Caco-2 (cell line): ENCODE measurements at regions of chr2 and their contacts with region 1.

Region 1: GRCh38 chr2:13193898-13194297 is 477.2 kb downstream of the TRIB2 start:
- DNase-seq: peak in 1 of 2 experiments; percentile 28
- H3K4me3 ChIP-seq: no peak overlapping the region
- H3K4me3 Mint-ChIP-seq: no peak overlapping the region
- H3K27ac Mint-ChIP-seq: no peak overlapping the region
- H3K4me1 ChIP-seq: no peaks in the 10 kb centered on the region
- H3K4me1 Mint-ChIP-seq: no peaks in the 10 kb centered on the region
- H3K27me3 ChIP-seq: no peaks in the 10 kb centered on the region
- H3K27me3 Mint-ChIP-seq: no peaks in the 10 kb centered on the region
- CTCF ChIP-seq: peak; percentile 40 to 42

Region 2: GRCh38 chr2:13413989-13414388 is 220.1 kb after region 1 on chr2:
- CTCF ChIA-PET with region 1: no interaction called
- POLR2A ChIA-PET with region 1: no interaction called
- intact Hi-C with region 1: loop called (anchors 10 kb)
- DNase-seq: no peak
- H3K4me3 ChIP-seq: no peak overlapping the region
- H3K4me3 Mint-ChIP-seq: no peak overlapping the region
- H3K27ac Mint-ChIP-seq: no peak overlapping the region
- H3K4me1 ChIP-seq: no peaks in the 10 kb centered on the region
- H3K4me1 Mint-ChIP-seq: no peaks in the 10 kb centered on the region
- H3K27me3 ChIP-seq: no peaks in the 10 kb centered on the region
- H3K27me3 Mint-ChIP-seq: no peaks in the 10 kb centered on the region
- CTCF ChIP-seq: no peak

Region 3: DNA sequence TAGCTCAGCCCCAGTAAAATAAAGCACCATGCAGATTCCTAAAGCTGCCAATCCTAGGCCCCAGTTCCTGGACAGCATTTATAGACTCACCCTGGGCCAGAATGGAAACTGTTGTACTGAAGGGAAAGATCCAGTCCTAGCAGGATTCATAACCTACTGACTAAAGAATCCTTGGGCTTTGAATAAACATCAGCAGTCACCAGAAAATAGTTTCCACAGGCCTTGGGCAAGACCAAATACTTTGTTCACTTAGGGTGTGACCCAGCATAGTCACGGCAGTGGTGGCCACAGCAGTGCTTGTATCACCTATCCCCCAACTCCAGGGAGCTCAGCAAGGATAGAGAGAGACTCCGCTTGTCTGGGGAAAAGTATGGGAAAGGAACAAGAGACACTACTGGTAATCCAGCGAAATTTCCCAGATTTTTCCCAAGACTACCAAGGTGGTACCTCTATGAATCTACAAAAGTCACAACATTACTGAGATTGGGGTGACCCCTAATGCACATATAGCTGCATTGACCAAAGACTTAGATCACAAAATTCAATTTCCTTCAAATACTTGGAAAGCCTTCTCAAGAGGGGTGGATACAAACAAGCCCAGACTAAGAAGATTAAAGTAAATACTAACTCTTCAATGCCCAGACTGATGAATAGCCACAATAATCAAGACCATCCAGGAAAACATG is 690.5 kb after region 1 on chr2:
- CTCF ChIA-PET with region 1: no interaction called
- POLR2A ChIA-PET with region 1: no interaction called
- intact Hi-C with region 1: loop called (anchors 5 kb)
- DNase-seq: no peak
- H3K4me3 ChIP-seq: no peak overlapping the region
- H3K4me3 Mint-ChIP-seq: no peak overlapping the region
- H3K27ac Mint-ChIP-seq: no peak overlapping the region
- H3K4me1 ChIP-seq: no peaks in the 10 kb centered on the region
- H3K4me1 Mint-ChIP-seq: no peaks in the 10 kb centered on the region
- H3K27me3 ChIP-seq: no peaks in the 10 kb centered on the region
- H3K27me3 Mint-ChIP-seq: no peaks in the 10 kb centered on the region
- CTCF ChIP-seq: no peak